ENCODE measurements at regions of chr3 and their contacts with region 1.

Region 1: DNA sequence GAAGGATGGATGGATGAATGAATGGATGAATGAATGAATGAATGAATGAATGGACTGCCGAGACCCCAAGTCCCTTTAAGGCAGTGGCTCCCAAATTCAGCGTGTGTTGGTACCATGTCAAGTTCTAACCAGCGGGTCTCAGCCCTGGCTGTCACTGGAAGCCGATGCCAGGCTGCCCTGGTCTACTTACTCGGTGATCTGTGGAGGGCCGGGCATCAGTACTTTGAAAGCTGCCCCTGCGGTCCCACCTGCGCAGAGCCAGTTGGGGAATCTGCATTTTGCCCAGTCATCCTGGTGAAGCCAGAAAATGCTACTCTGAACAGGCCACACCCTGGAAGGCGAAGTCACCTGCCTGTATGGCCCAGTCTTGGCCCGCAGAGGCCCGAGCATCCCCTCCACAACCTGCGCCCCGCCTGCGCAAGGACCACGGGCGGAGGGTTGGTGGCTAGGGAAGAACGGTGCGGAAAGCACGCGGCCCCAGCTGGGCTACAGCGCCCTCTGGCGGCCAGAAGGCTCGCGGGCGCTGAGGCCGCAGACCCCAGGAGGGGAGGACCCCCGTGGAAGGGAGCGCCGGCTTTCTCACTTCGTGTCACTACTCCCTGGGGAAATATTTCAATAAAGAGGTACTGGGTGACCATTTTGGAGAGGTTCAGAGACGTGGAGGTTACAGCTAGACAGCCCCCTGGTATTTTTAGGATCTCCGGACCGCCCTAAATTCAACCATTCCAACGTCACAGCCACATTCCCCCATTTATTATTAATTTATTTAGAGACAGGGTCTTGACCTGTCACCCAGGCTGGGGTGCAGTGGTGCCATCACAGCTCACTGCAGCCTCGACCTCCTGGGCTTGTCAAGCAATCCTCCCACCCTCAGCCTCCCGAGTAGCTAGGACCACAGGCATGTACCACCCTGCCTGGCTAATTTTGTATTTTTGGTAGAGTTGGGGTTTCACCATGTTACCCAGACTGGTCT is 34.9 kb downstream of the PRKCD start:
- DNase-seq: peak; percentile 81
- ATAC-seq: peak; percentile 62
- H3K4me3 ChIP-seq: no peak overlapping the region
- H3K4me3 Mint-ChIP-seq: peak overlapping the region; percentile 21
- H3K27ac ChIP-seq: no peak overlapping the region
- H3K27ac Mint-ChIP-seq: no peak overlapping the region
- H3K4me1 ChIP-seq: peaks cover 26 to 56% of the 10 kb centered on the region in 2 donors
- H3K4me1 Mint-ChIP-seq: peaks cover 35% of the 10 kb centered on the region
- H3K27me3 ChIP-seq: no peaks in the 10 kb centered on the region
- H3K27me3 Mint-ChIP-seq: no peaks in the 10 kb centered on the region
- CTCF ChIP-seq: peak; percentile 99

Region 2: GRCh38 chr3:53114011-53114400 is 81.9 kb before region 1 on chr3:
- CTCF ChIA-PET with region 1: interaction called, 262 read pairs
- POLR2A ChIA-PET with region 1: interaction called, 3 read pairs
- intact Hi-C with region 1: loop called (anchors 1 kb)
- DNase-seq: peak; percentile 86
- ATAC-seq: peak; percentile 84
- H3K4me3 ChIP-seq: no peak overlapping the region
- H3K4me3 Mint-ChIP-seq: no peak overlapping the region
- H3K27ac ChIP-seq: no peak overlapping the region
- H3K27ac Mint-ChIP-seq: no peak overlapping the region
- H3K4me1 ChIP-seq: no peaks in the 10 kb centered on the region
- H3K4me1 Mint-ChIP-seq: no peaks in the 10 kb centered on the region
- H3K27me3 ChIP-seq: no peaks in the 10 kb centered on the region
- H3K27me3 Mint-ChIP-seq: no peaks in the 10 kb centered on the region
- CTCF ChIP-seq: peak; percentile 90

Region 3: DNA sequence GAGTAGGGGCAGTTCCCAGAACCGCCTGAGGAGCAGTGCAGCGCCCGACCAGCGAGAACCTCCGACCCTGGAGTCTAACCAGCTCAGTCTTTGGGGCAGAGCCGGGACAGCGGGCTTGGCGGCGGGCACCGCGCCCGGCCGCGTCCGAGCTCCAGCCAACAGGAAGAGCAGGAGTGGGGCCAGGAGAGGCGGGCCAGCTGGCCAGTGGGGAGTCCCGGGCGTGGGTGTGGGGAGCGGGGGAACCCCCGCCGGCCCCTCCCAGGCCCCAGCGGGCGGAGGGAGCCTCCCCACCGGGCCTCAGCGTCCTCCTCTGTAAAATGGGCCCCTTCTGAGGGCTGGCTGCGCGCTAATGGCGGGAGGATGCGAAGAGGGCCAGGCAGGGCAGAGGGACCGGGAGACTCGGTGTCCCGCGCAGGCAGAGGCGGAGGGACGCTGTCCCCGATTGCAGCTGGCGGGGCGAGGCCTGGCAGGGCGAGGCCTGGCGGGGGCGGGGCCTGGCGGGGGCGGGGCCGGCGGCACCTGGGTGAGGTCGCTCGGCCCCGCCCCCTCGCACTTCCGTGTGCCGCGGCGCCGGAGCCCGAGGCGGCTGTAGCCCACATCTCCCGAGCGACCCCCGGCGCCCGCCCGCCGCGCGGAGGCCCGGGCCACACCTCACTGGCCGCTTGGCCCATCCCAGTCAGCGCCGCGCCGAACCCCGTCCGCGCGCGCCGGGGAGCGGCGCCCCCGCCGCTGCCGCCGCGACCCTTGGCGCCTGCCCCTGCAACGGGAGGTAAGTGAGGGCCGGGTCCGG is 35.0 kb before region 1 on chr3 and contains the start of gene PRKCD:
- CTCF ChIA-PET with region 1: interaction called, 48 read pairs
- POLR2A ChIA-PET with region 1: interaction called, 5 read pairs
- intact Hi-C with region 1: loop called (anchors 1 kb)
- DNase-seq: peak; percentile 91
- ATAC-seq: peak; percentile 70
- H3K4me3 ChIP-seq: peak within 1 kb of the TSS; percentile 46 to 98 (median 86)
- H3K4me3 Mint-ChIP-seq: peak within 1 kb of the TSS; percentile 94
- H3K27ac ChIP-seq: peak within 1 kb of the TSS; percentile 80 to 82
- H3K27ac Mint-ChIP-seq: peak within 1 kb of the TSS; percentile 96
- H3K4me1 ChIP-seq: peaks cover 44 to 67% of the 10 kb centered on the region in 2 donors
- H3K4me1 Mint-ChIP-seq: peaks cover 54% of the 10 kb centered on the region
- H3K27me3 ChIP-seq: peaks cover 0 to 12% (median 5%) of the 10 kb centered on the region in 4 experiments
- H3K27me3 Mint-ChIP-seq: peaks cover 2% of the 10 kb centered on the region
- CTCF ChIP-seq: peak; percentile 70
- total RNA-seq, gene PRKCD: 42.7 and 46.7 TPM in 2 replicates

Region 4: GRCh38 chr3:53174346-53175250 is 21.3 kb before region 1 on chr3:
- CTCF ChIA-PET with region 1: interaction called, 30 read pairs
- POLR2A ChIA-PET with region 1: no interaction called
- intact Hi-C with region 1: no loop called
- DNase-seq: no peak
- ATAC-seq: peak; percentile 36
- H3K4me3 ChIP-seq: no peak overlapping the region
- H3K4me3 Mint-ChIP-seq: peak overlapping the region; percentile 77
- H3K27ac ChIP-seq: no peak overlapping the region
- H3K27ac Mint-ChIP-seq: peak overlapping the region; percentile 90
- H3K4me1 ChIP-seq: peaks cover 77 to 97% of the 10 kb centered on the region in 2 donors
- H3K4me1 Mint-ChIP-seq: peaks cover 88% of the 10 kb centered on the region
- H3K27me3 ChIP-seq: no peaks in the 10 kb centered on the region
- H3K27me3 Mint-ChIP-seq: no peaks in the 10 kb centered on the region
- CTCF ChIP-seq: no peak

Region 5: GRCh38 chr3:53255775-53256703 is 60.2 kb after region 1 on chr3 and contains the start of gene TKT:
- CTCF ChIA-PET with region 1: interaction called, 11 read pairs
- POLR2A ChIA-PET with region 1: no interaction called
- intact Hi-C with region 1: no loop called
- DNase-seq: peak; percentile 87
- ATAC-seq: peak; percentile 87
- H3K4me3 ChIP-seq: peak within 1 kb of the TSS; percentile 72 to 83 (median 75)
- H3K4me3 Mint-ChIP-seq: peak within 1 kb of the TSS; percentile 91
- H3K27ac ChIP-seq: peak within 1 kb of the TSS; percentile 50 to 63
- H3K27ac Mint-ChIP-seq: peak within 1 kb of the TSS; percentile 81
- H3K4me1 ChIP-seq: peaks cover 30 to 42% of the 10 kb centered on the region in 2 donors
- H3K4me1 Mint-ChIP-seq: peaks cover 36% of the 10 kb centered on the region
- H3K27me3 ChIP-seq: no peaks in the 10 kb centered on the region
- H3K27me3 Mint-ChIP-seq: no peaks in the 10 kb centered on the region
- CTCF ChIP-seq: no peak
- total RNA-seq, gene TKT: 81.0 and 85.8 TPM in 2 replicates

Region 6: DNA sequence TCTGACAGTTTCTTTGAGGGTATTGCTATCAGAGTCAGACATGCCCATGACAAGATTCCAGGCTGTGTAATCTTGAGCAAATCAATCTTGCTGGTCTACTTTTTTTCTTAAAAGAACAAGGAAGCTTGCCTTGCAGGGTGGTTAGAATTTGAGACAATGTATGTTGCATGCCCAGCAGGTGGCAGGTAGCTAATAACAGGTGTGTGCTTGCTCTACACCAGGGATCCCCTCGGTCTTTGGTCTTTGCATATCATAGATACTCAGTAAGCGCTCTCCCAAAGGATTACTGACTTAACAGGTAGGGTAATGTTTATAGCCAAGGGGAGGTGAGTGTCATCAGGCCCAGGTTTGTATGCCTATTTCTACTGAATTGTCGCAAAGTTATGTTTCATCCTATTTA is 335.9 kb after region 1 on chr3:
- CTCF ChIA-PET with region 1: no interaction called
- POLR2A ChIA-PET with region 1: no interaction called
- intact Hi-C with region 1: no loop called
- DNase-seq: peak; percentile 18
- ATAC-seq: no peak
- H3K4me3 ChIP-seq: no peak overlapping the region
- H3K4me3 Mint-ChIP-seq: no peak overlapping the region
- H3K27ac ChIP-seq: no peak overlapping the region
- H3K27ac Mint-ChIP-seq: no peak overlapping the region
- H3K4me1 ChIP-seq: no peaks in the 10 kb centered on the region
- H3K4me1 Mint-ChIP-seq: no peaks in the 10 kb centered on the region
- H3K27me3 ChIP-seq: no peaks in the 10 kb centered on the region
- H3K27me3 Mint-ChIP-seq: peaks cover 11% of the 10 kb centered on the region
- CTCF ChIP-seq: peak; percentile 16

Measured in B cell (primary cell).